Activated T-helper 1 cell treated with anti-CD3 and anti-CD28 coated beads, Interleukin-12 subunit alpha, Interleukin-12 subunit beta, Interleukin-2, Interleukin-4 antibody, amounts not matched to agents 30 ng/mL and 10 ng/mL and 1 ng/mL, durations not matched to agents 14 hours and 24 hours and 36 hours (primary cell): ENCODE measurements at regions of chr20 and their contacts with region 1.

Region 1: DNA sequence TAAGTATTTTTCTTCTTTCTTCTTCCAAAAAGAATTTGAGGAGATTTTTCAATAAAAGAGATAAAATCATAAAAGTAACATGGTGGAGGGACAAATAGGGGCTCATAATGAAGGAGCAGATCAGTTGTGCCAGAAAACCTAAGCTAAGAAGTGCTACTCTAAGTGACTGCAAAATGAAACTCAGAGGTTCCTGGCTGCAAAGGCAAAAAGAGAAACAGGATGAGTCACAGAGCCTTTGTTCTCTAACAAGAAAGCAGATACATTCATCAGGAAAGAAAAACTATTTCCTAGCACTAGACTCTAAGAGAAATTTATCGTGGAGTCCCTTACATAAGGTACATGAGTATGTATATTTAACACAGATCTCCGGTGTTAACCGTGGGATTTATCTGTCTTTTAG is 49.8 kb downstream of the TSHZ2 start:
- DNase-seq: peak; percentile 33
- H3K4me3 Mint-ChIP-seq: peak overlapping the region; percentile 24
- H3K27ac Mint-ChIP-seq: peak overlapping the region; percentile 90
- H3K4me1 Mint-ChIP-seq: peaks cover 87% of the 10 kb centered on the region
- H3K27me3 Mint-ChIP-seq: no peaks in the 10 kb centered on the region

Region 2: DNA sequence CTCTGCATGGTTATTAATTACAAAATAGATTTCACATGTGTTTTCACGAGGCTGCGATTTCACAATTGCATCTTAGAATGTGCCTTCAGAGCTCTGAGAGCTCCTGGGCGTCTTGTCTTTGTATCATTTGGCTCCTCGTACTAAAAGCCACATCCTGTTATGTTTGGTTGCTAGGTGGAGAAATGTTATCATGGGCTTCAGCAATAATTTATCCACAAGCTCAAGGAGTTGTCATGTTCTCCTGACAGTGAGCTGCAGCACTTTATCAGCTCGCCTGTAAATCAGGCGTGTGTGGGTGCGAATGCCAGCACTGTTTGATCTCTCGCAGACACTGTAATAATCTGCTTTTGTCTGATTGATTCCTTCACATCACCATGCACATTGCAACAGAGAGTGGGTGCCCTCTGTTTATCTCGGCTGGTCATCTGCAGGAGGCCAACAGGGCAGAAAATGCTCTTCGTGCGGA is 611.7 kb before region 1 on chr20:
- intact Hi-C with region 1: loop called (anchors 5 kb)
- DNase-seq: peak; percentile 38
- H3K4me3 Mint-ChIP-seq: peak overlapping the region; percentile 53
- H3K27ac Mint-ChIP-seq: peak overlapping the region; percentile 66
- H3K4me1 Mint-ChIP-seq: peaks cover 43% of the 10 kb centered on the region
- H3K27me3 Mint-ChIP-seq: no peaks in the 10 kb centered on the region

Region 3: DNA sequence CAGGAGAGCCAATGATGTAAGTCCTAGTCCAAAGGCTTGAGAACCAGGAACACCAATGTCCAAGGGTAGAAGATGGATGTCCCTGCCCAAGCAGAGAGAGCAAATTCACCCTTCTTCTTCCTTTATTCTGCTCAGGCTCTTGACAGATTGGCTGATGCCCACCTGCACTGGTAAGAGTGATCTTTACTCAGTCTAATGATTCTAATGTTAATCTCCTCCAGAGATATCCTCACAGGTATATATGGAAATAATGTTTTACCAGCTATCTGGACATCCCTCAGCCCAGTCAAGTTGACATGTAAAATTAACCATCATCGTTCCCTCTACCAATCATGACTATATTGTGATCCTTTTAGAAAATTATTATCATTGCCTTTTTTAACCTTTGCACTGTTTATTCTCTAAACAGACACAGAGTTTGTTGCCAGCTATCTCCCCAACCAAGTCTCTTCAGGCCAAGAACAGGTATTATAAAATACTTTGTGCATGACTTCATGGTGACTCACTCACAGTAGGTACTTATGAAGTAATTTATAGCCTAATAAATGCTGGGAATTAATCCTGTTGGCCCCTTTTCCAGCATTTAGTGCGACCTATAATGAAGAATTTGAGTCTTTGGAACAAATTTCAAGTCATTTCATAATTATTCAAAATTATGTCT is 75.9 kb before region 1 on chr20:
- intact Hi-C with region 1: no loop called
- DNase-seq: no peak
- H3K4me3 Mint-ChIP-seq: no peak overlapping the region
- H3K27ac Mint-ChIP-seq: no peak overlapping the region
- H3K4me1 Mint-ChIP-seq: no peaks in the 10 kb centered on the region
- H3K27me3 Mint-ChIP-seq: peaks cover 2% of the 10 kb centered on the region

Region 4: GRCh38 chr20:52965380-52965779 is 56.6 kb before region 1 on chr20:
- intact Hi-C with region 1: no loop called
- DNase-seq: no peak
- H3K4me3 Mint-ChIP-seq: no peak overlapping the region
- H3K27ac Mint-ChIP-seq: no peak overlapping the region
- H3K4me1 Mint-ChIP-seq: peaks cover 5% of the 10 kb centered on the region
- H3K27me3 Mint-ChIP-seq: no peaks in the 10 kb centered on the region

Region 5: GRCh38 chr20:53001498-53002301 is 20.2 kb before region 1 on chr20:
- intact Hi-C with region 1: loop called (anchors 1 kb)
- DNase-seq: no peak
- H3K4me3 Mint-ChIP-seq: peak overlapping the region; percentile 79
- H3K27ac Mint-ChIP-seq: peak overlapping the region; percentile 98
- H3K4me1 Mint-ChIP-seq: peaks cover 59% of the 10 kb centered on the region
- H3K27me3 Mint-ChIP-seq: no peaks in the 10 kb centered on the region